Activated T-helper 1 cell treated with anti-CD3 and anti-CD28 coated beads, Interleukin-12 subunit alpha, Interleukin-12 subunit beta, Interleukin-2, Interleukin-4 antibody, amounts not matched to agents 30 ng/mL and 10 ng/mL and 1 ng/mL, durations not matched to agents 14 hours and 24 hours and 36 hours (primary cell): ENCODE measurements at regions of chr15 and their contacts with region 1.

Region 1: DNA sequence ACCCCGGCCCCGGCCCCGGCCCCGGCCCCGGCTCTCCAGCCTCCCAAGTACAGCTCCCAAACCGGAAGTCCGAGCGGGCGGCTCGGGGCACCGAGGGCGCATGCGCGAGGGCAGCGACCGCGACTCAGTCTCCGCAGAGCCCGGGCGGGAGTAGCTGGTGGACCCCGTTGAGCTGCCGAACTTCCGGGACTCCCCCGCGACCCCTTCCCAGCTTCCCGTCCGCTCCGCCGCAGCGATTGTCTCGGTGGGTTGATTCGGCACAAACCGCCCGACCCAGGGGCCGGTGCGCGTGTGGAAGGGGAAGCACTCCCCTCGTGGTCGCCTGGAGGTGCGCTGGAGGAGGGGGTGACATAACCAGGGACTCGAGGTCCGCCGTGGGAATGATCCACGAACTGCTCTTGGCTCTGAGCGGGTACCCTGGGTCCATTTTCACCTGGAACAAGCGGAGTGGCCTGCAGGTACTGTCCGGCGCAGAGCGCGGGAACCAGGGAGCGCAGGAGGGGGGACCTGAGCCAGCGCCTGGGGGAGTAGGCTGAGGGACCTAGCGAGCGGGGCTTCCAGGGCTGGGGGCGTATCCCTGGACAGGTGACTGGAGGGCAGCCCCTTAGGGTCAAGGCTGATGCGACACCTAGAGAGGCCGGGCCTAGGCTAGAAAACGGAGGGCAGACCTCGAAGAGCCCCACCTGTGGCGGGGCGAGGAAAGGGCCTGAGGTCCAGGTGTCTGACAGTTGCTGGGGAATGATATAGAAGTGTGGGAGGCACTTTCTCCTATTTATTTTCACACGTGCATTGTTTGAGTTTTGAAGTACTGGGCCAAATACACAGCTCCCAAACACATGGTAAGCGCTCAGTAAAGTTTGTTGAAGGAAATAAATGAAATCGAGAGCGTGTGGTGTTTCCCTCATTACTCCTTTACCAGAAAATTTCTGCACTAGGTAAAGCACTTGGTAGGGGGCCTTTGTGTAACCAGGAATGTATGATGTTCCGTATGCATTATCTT is at the starts of genes TUBGCP4 and ZSCAN29:
- DNase-seq: peak; percentile 77
- H3K4me3 Mint-ChIP-seq: peak within 1 kb of the TSS; percentile 92
- H3K27ac Mint-ChIP-seq: peak within 1 kb of the TSS; percentile 83
- H3K4me1 Mint-ChIP-seq: peaks cover 54% of the 10 kb centered on the region
- H3K27me3 Mint-ChIP-seq: no peaks in the 10 kb centered on the region
- total RNA-seq, gene TUBGCP4: 46.5 and 47.2 TPM in 2 replicates
- total RNA-seq, gene ZSCAN29: 32.9 and 34.9 TPM in 2 replicates

Region 2: GRCh38 chr15:43329960-43330779 is 41.1 kb before region 1 on chr15 and contains the start of gene LCMT2:
- intact Hi-C with region 1: loop called (anchors 1 kb)
- DNase-seq: peak; percentile 86
- H3K4me3 Mint-ChIP-seq: peak within 1 kb of the TSS; percentile 87
- H3K27ac Mint-ChIP-seq: peak within 1 kb of the TSS; percentile 94
- H3K4me1 Mint-ChIP-seq: peaks cover 40% of the 10 kb centered on the region
- H3K27me3 Mint-ChIP-seq: no peaks in the 10 kb centered on the region
- total RNA-seq, gene LCMT2: 15.4 and 15.7 TPM in 2 replicates

Region 3: DNA sequence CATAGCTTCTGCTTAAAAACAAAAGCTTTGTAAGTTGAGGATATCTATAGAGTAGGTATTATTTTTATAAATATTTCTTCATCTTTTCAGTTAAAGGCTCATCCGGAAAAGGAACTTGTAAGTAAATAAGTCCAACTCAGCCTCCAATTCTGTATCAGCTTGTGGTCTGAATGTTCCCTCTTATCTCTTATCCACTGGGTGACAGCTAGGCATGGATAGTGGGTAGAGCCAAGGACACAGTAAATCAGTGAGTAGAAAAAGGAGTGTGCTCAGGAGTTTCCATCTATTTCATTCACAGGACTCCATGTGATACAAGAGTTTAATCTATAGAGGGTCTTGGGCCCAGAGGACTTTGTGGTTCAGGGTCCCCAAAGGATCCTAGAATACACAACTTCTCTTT is 772.9 kb after region 1 on chr15:
- intact Hi-C with region 1: no loop called
- DNase-seq: no peak
- H3K4me3 Mint-ChIP-seq: no peak overlapping the region
- H3K27ac Mint-ChIP-seq: no peak overlapping the region
- H3K4me1 Mint-ChIP-seq: no peaks in the 10 kb centered on the region
- H3K27me3 Mint-ChIP-seq: peaks cover 5% of the 10 kb centered on the region